ENCODE measurements at regions of chr5 and their contacts with region 1.

Region 1: DNA sequence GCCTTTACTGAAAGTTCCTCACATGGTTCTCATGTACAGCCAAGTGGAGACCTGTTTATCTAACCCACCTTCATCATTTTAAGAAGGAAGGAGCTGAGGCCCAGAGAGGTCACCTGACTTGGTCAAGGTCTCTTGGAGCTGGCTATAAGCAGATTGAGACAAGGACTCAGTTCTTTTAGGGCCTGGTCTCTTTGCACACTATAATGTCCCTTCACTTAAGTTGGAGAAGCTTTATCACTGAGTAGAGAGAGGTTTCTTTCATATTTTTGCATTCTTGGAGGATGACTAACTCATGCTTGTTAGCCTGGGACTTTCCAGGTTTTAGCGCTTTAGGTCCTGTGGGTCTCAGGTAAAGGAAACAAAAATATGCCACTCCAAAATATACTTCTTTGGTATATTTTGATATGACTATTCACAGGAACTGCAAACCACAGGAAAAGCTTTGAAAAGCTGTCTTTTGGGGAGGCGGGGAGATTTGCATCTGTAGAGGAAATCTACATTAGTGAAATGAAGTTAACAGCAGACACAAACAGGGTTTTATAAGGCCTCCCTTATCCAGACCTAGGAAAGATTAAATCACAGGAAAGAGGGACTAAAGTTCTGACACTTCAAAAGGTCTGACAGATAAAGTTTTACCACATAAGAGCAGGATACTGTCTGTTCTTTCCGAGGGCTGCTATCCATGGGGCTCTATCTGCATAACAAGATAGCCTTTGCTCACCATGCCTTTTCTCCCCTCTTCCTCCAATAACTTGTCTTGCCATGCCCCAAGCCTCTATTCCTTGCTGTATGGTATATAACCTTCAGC is 95.8 kb upstream of the ANKRD55 start:
- DNase-seq: peak; percentile 59
- H3K4me3 Mint-ChIP-seq: peak overlapping the region; percentile 63
- H3K27ac Mint-ChIP-seq: peak overlapping the region; percentile 87
- H3K4me1 Mint-ChIP-seq: peaks cover 74% of the 10 kb centered on the region
- H3K27me3 Mint-ChIP-seq: no peaks in the 10 kb centered on the region

Region 2: GRCh38 chr5:55338810-55339243 is 990.1 kb before region 1 on chr5:
- intact Hi-C with region 1: loop called (anchors 1 kb)
- DNase-seq: no peak
- H3K4me3 Mint-ChIP-seq: peak overlapping the region; percentile 37
- H3K27ac Mint-ChIP-seq: peak overlapping the region; percentile 87
- H3K4me1 Mint-ChIP-seq: peaks cover 22% of the 10 kb centered on the region
- H3K27me3 Mint-ChIP-seq: no peaks in the 10 kb centered on the region

Region 3: GRCh38 chr5:55903121-55903701 is 425.7 kb before region 1 on chr5:
- intact Hi-C with region 1: loop called (anchors 1 kb)
- DNase-seq: peak; percentile 79
- H3K4me3 Mint-ChIP-seq: peak overlapping the region; percentile 55
- H3K27ac Mint-ChIP-seq: peak overlapping the region; percentile 78
- H3K4me1 Mint-ChIP-seq: peaks cover 67% of the 10 kb centered on the region
- H3K27me3 Mint-ChIP-seq: peaks cover 2% of the 10 kb centered on the region

Region 4: DNA sequence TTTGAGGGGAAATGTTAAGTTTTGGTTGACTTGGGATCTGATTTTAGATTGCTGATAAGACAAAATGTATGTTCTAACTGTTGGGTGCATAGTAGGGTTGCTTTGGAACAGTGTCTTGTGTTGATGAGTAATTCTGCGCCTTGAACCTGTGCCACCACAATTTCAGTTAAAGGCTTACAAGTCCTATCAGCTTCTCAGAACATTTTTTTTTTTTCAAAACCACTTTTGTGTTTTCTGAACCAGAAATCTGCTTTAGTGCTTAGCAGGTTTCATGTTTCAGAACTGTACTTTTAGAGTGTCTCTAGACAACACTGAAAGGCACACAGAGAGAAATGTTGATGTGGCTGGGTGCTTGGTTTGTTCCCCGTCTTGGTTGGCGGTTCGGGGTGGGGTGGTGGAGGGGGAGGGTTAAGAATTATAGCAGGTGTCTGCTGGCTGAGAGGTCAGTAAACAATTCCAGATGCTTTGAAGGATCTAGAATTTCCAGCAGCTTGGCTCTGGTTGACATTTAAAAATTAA is 180.4 kb before region 1 on chr5:
- intact Hi-C with region 1: loop called (anchors 2 kb)
- DNase-seq: peak; percentile 43
- H3K4me3 Mint-ChIP-seq: peak overlapping the region; percentile 23
- H3K27ac Mint-ChIP-seq: peak overlapping the region; percentile 81
- H3K4me1 Mint-ChIP-seq: peaks cover 60% of the 10 kb centered on the region
- H3K27me3 Mint-ChIP-seq: no peaks in the 10 kb centered on the region

Region 5: DNA sequence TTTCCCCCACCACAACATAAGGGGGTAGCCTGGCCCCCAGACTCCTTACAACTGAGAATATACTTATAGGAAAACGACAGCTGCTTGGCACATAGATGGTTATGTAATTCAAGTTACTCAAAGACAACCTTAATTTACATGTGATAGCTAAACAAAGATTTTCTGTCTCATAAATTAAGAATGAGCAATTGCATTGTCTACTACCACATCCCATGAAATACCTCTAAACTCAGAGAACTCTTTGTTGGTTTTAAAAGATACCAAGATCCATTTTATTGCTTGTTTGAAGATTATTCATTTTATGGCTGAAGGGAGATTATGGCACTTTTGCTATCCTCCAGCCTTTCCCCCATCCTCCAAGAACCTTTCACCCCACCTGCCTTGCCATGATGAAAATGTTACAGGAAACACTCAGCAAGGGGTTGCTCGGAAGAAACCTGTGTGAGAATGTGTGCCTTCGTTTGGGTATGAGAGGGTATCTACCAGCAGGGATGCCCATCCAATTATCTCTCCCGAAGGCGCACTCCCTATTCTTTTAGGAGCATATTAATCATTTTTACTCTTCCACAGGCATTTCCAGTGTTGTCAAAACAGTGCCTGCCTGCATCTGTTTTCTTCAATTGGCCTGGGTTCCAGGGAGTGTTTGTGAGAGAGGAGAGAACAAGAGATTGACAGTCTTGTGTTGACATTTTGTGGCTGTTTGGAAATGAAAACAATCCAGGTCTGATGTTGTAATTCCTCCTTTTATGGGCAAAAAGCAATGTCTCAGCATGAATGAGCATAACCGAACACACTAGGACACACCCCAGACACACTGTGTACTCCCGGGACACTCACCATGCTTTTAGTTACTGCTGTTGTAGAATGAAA is 112.1 kb after region 1 on chr5:
- intact Hi-C with region 1: loop called (anchors 2 kb)
- DNase-seq: no peak
- H3K4me3 Mint-ChIP-seq: no peak overlapping the region
- H3K27ac Mint-ChIP-seq: no peak overlapping the region
- H3K4me1 Mint-ChIP-seq: peaks cover 6% of the 10 kb centered on the region
- H3K27me3 Mint-ChIP-seq: peaks cover 5% of the 10 kb centered on the region

Region 6: GRCh38 chr5:56710826-56711590 is 382.1 kb after region 1 on chr5:
- intact Hi-C with region 1: loop called (anchors 5 kb)
- DNase-seq: no peak
- H3K4me3 Mint-ChIP-seq: no peak overlapping the region
- H3K27ac Mint-ChIP-seq: no peak overlapping the region
- H3K4me1 Mint-ChIP-seq: peaks cover 29% of the 10 kb centered on the region
- H3K27me3 Mint-ChIP-seq: peaks cover 9% of the 10 kb centered on the region